ENCODE measurements at regions of chr6 and their contacts with region 1.

Region 1: GRCh38 chr6:118419448-118420394 is 128.4 kb upstream of the PLN start:
- DNase-seq: no peak
- H3K4me3 ChIP-seq: no peak overlapping the region
- H3K27ac ChIP-seq: no peak overlapping the region
- H3K4me1 ChIP-seq: no peaks in the 10 kb centered on the region
- H3K27me3 ChIP-seq: no peaks in the 10 kb centered on the region
- CTCF ChIP-seq: no peak
- POLR2A ChIP-seq: no peak

Region 2: DNA sequence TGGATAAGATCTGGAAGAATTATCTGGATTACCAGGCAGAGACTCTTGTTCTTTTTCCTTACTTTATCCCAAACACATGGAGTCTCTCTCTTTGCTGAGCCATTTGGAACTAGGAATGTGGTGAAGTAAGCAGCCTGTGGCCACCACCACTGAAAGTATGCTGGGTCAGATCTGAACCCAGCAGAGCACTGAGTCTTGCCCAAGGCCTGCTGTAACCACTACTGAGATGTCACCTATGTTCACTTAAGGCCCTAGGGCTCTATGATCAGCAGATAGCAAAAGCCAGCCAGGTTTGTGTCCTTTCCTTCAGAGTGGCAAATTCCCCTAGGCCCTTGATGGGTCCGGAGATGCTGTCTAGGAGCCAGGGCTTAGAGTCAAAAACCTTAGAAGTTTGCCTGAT is 25.1 kb after region 1 on chr6:
- CTCF ChIA-PET with region 1: no interaction called
- POLR2A ChIA-PET with region 1: no interaction called
- dilution Hi-C with region 1: no loop called
- intact Hi-C with region 1: loop called (anchors 2 kb)
- DNase-seq: no peak
- H3K4me3 ChIP-seq: no peak overlapping the region
- H3K27ac ChIP-seq: no peak overlapping the region
- H3K4me1 ChIP-seq: no peaks in the 10 kb centered on the region
- H3K27me3 ChIP-seq: no peaks in the 10 kb centered on the region
- CTCF ChIP-seq: no peak
- POLR2A ChIP-seq: no peak